PC-9 (cell line): ENCODE measurements at regions of chr2 and their contacts with region 1.

Region 1: DNA sequence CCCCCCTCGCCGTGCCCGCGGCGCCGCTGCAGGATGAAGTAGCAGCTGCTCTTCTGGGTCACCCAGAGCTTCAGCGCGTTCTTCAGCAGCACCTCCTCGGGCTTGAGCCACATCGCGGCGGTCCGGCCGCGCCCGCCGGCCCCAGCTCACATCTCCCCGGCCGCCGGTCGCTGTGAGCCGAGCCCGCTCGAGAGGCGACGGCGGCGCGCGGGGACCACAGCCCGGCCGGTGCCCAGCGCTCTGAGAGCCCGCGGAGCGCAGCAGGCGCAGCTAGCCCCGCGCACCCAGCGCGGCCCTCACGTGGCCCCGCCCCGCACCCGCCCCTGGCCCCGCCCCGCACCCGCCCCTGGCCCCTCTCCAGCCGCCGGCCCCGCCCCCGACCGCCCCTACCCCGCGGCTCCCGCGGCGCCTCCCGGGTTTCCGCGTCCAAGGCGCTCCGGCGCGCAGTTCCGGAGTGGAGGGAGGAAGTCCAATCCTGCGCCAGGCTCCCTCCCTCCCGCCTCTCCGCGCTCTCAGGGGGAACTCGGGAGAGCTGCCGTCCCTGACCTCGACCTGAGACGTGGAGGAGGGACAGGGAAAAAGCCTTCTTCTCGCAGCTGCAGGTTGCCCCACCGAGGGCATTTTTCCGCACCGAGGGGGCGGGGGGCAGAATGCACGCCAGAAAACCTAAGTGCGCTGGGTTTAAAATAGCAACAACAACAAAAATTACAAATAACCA is at the start of gene TBC1D8:
- DNase-seq: peak; percentile 57 to 88
- H3K4me3 ChIP-seq: peak within 1 kb of the TSS; percentile 86
- H3K27ac ChIP-seq: peak within 1 kb of the TSS; percentile 28
- H3K4me1 ChIP-seq: peaks cover 35% of the 10 kb centered on the region
- H3K27me3 ChIP-seq: no peaks in the 10 kb centered on the region
- CTCF ChIP-seq: no peak
- total RNA-seq, gene TBC1D8: 25.2 and 25.3 TPM in 2 replicates

Region 2: GRCh38 chr2:101001691-101002561 is 149.4 kb before region 1 on chr2 and contains the start of gene RPL31:
- CTCF ChIA-PET with region 1: interaction called, 10 read pairs
- POLR2A ChIA-PET with region 1: interaction called, 6 read pairs
- intact Hi-C with region 1: no loop called
- DNase-seq: peak; percentile 86 to 92
- H3K4me3 ChIP-seq: peak within 1 kb of the TSS; percentile 96
- H3K27ac ChIP-seq: peak within 1 kb of the TSS; percentile 89
- H3K4me1 ChIP-seq: peaks cover 14% of the 10 kb centered on the region
- H3K27me3 ChIP-seq: no peaks in the 10 kb centered on the region
- CTCF ChIP-seq: no peak
- total RNA-seq, gene RPL31: 1,090 and 1,251 TPM in 2 replicates

Region 3: GRCh38 chr2:101036562-101037457 is 114.5 kb before region 1 on chr2:
- CTCF ChIA-PET with region 1: interaction called, 12 read pairs
- POLR2A ChIA-PET with region 1: no interaction called
- intact Hi-C with region 1: loop called (anchors 1 kb)
- DNase-seq: no peak
- H3K4me3 ChIP-seq: no peak overlapping the region
- H3K27ac ChIP-seq: no peak overlapping the region
- H3K4me1 ChIP-seq: no peaks in the 10 kb centered on the region
- H3K27me3 ChIP-seq: no peaks in the 10 kb centered on the region
- CTCF ChIP-seq: peak; percentile 71

Region 4: GRCh38 chr2:101064868-101065549 is 86.3 kb before region 1 on chr2:
- CTCF ChIA-PET with region 1: no interaction called
- POLR2A ChIA-PET with region 1: no interaction called
- intact Hi-C with region 1: no loop called
- DNase-seq: peak; percentile 34 to 76
- H3K4me3 ChIP-seq: no peak overlapping the region
- H3K27ac ChIP-seq: peak overlapping the region; percentile 66
- H3K4me1 ChIP-seq: peaks cover 18% of the 10 kb centered on the region
- H3K27me3 ChIP-seq: no peaks in the 10 kb centered on the region
- CTCF ChIP-seq: no peak

Region 5: DNA sequence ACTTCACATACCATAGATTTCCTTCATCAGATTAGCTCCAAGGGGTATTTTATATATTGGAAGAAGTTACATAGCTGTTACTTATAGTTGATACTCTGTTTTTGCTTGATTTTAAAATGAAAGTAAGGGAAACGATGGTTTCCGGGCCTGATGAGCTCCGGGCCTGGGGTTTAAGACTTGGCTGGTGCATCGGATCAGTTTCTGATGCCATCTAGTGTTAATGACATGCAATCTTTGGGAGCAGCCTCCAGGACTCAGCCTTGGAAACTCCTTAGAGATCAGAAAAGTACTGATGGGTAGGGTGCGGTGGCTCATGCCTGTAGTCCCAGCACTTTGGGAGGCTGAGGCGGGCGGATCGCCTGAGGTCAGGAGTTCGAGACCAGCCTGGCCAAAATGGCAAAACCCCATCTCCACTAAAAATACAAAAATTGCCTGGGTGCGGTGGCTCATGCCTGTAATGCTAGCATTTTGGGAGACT is 54.3 kb after region 1 on chr2:
- CTCF ChIA-PET with region 1: no interaction called
- POLR2A ChIA-PET with region 1: no interaction called
- intact Hi-C with region 1: loop called (anchors 2 kb)
- DNase-seq: peak; percentile 49 to 75
- H3K4me3 ChIP-seq: peak overlapping the region; percentile 48; the same call in 1 of the 2 replicates
- H3K27ac ChIP-seq: peak overlapping the region; percentile 28; the same call in 1 of the 2 replicates
- H3K4me1 ChIP-seq: peaks cover 5% of the 10 kb centered on the region; the same call in 1 of the 2 replicates
- H3K27me3 ChIP-seq: no peaks in the 10 kb centered on the region
- CTCF ChIP-seq: peak; percentile 59